AG04450 (cell line): ENCODE measurements at regions of chr19 and their contacts with region 1.

Region 1: GRCh38 chr19:7098701-7099596 is 29.4 kb downstream of the ZNF557 start:
- DNase-seq: peak; percentile 74
- H3K4me3 ChIP-seq: peak overlapping the region; percentile 78
- H3K27ac ChIP-seq: peak overlapping the region; percentile 90
- H3K27me3 ChIP-seq: no peaks in the 10 kb centered on the region
- CTCF ChIP-seq: no peak

Region 2: DNA sequence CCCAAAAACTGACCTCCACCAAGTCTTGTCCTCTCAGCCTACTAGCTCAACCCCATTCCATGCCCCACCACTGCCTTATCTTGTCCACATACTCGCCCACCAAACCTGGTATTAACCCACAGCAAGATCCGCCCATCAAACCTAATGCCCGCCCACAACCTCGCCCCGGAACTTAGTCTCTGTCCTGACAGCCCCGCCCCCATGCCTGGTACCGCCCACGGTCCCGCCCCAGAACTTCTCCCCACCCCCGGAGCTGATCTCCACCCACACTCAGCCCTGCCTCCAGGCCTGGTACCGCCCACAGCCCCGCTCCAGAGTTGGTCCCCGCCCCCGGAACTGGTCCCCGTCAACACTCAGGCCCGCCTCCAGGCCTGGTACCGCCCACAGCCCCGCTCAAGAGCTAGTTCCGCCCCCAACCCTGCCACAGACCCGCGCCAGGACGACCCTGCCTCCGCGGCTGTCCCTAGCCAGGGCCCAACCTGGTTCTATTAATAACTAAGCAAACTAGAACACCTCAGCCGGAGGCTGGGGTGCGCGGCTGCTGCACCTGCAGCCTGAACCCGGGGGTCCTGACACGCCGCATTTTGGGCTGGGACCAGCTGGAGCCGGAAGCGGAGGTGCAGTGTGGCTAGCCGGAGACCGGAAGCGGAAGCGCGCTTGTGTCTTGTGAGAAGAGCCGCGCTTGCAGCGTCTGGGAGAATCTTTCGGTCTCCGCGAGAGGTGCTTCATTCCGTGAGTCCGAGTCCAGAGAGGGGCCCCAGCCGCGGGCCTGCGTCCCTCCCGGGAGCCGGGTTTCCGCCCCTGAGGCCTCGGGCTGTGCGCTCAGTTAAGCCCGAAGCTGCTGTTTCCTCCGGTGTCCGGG is 29.7 kb before region 1 on chr19 and contains the start of gene ZNF557:
- CTCF ChIA-PET with region 1: interaction called, 6 read pairs
- POLR2A ChIA-PET with region 1: interaction called, 13 read pairs
- DNase-seq: peak; percentile 90
- H3K4me3 ChIP-seq: peak within 1 kb of the TSS; percentile 94
- H3K27ac ChIP-seq: peak within 1 kb of the TSS; percentile 77
- H3K27me3 ChIP-seq: no peaks in the 10 kb centered on the region
- CTCF ChIP-seq: no peak
- polyA plus RNA-seq, gene ZNF557: 5.2 and 6.2 TPM in 2 replicates

Region 3: GRCh38 chr19:7340959-7341837 is 242.2 kb after region 1 on chr19:
- CTCF ChIA-PET with region 1: interaction called, 57 read pairs
- POLR2A ChIA-PET with region 1: no interaction called
- DNase-seq: peak; percentile 51
- H3K4me3 ChIP-seq: no peak overlapping the region
- H3K27ac ChIP-seq: no peak overlapping the region
- H3K27me3 ChIP-seq: no peaks in the 10 kb centered on the region
- CTCF ChIP-seq: peak; percentile 91

Region 4: DNA sequence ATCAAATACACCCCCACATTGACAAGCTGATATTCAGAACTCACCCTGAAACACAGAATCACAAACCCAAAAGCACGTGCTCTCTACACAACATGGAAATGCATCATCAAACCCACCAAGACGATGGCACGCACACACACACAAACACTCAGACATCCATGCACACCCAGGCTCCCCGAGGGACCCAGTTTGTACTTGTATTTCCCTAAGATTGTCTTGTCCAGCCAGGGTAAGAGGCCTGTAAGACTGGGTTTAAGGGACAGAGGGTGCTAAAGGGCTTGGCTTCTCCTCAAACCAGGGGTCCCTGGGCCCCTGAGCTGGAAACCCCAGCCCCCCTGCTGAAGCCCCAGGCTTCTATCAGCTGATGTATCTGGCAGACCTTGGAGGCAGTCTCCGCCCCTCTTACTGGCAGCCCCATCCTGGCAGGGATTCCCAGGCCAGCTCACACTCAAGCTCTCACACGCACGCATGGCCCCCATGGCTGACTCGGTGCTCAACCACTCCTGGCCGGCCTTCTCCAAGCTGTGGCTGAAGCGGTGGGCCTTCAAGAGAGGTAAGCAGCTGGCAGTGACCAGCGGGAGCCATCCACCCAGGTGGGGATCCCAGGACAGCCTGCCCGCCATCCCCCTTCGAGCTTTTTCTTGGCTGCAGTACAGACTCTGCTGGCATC is 256.3 kb after region 1 on chr19:
- CTCF ChIA-PET with region 1: interaction called, 19 read pairs
- POLR2A ChIA-PET with region 1: no interaction called
- DNase-seq: no peak
- H3K4me3 ChIP-seq: no peak overlapping the region
- H3K27ac ChIP-seq: no peak overlapping the region
- H3K27me3 ChIP-seq: peaks cover 11% of the 10 kb centered on the region
- CTCF ChIP-seq: no peak

Region 5: GRCh38 chr19:7382694-7383093 is 283.7 kb after region 1 on chr19:
- CTCF ChIA-PET with region 1: interaction called, 11 read pairs
- POLR2A ChIA-PET with region 1: no interaction called
- DNase-seq: no peak
- H3K4me3 ChIP-seq: no peak overlapping the region
- H3K27ac ChIP-seq: no peak overlapping the region
- H3K27me3 ChIP-seq: peaks cover 6% of the 10 kb centered on the region
- CTCF ChIP-seq: no peak

Region 6: GRCh38 chr19:7799640-7800355 is 700.8 kb after region 1 on chr19:
- CTCF ChIA-PET with region 1: interaction called, 13 read pairs
- POLR2A ChIA-PET with region 1: no interaction called
- DNase-seq: peak; percentile 55
- H3K4me3 ChIP-seq: peak overlapping the region; percentile 51
- H3K27ac ChIP-seq: no peak overlapping the region
- H3K27me3 ChIP-seq: peaks cover 2% of the 10 kb centered on the region
- CTCF ChIP-seq: peak; percentile 62